ENCODE measurements at regions of chr17 and their contacts with region 1.

Region 1: GRCh38 chr17:19321481-19322128 is 40.9 kb downstream of the B9D1 start:
- DNase-seq: no peak
- H3K4me3 ChIP-seq: no peak overlapping the region
- H3K27ac ChIP-seq: no peak overlapping the region
- H3K4me1 ChIP-seq: peaks cover 0 to 16% (median 8%) of the 10 kb centered on the region in 4 experiments; a peak in 6 of 7 replicates
- H3K27me3 ChIP-seq: no peaks in the 10 kb centered on the region
- CTCF ChIP-seq: peak; percentile 38 to 61 (median 56)
- EP300 ChIP-seq: no peak
- POLR2A ChIP-seq: no peak
- RAD21 ChIP-seq: peak in 1 of 2 experiments; percentile 40; a peak in 3 of 4 replicates

Region 2: GRCh38 chr17:19306160-19307111 is 15.2 kb before region 1 on chr17:
- CTCF ChIA-PET with region 1: interaction called, 16 read pairs
- POLR2A ChIA-PET with region 1: interaction called, 3 read pairs
- DNase-seq: no peak
- H3K4me3 ChIP-seq: no peak overlapping the region
- H3K27ac ChIP-seq: no peak overlapping the region
- H3K4me1 ChIP-seq: peaks cover 0 to 4% (median 0%) of the 10 kb centered on the region in 4 experiments; a peak in 2 of 7 replicates
- H3K27me3 ChIP-seq: no peaks in the 10 kb centered on the region
- CTCF ChIP-seq: no peak
- EP300 ChIP-seq: no peak
- POLR2A ChIP-seq: no peak
- RAD21 ChIP-seq: no peak

Region 3: DNA sequence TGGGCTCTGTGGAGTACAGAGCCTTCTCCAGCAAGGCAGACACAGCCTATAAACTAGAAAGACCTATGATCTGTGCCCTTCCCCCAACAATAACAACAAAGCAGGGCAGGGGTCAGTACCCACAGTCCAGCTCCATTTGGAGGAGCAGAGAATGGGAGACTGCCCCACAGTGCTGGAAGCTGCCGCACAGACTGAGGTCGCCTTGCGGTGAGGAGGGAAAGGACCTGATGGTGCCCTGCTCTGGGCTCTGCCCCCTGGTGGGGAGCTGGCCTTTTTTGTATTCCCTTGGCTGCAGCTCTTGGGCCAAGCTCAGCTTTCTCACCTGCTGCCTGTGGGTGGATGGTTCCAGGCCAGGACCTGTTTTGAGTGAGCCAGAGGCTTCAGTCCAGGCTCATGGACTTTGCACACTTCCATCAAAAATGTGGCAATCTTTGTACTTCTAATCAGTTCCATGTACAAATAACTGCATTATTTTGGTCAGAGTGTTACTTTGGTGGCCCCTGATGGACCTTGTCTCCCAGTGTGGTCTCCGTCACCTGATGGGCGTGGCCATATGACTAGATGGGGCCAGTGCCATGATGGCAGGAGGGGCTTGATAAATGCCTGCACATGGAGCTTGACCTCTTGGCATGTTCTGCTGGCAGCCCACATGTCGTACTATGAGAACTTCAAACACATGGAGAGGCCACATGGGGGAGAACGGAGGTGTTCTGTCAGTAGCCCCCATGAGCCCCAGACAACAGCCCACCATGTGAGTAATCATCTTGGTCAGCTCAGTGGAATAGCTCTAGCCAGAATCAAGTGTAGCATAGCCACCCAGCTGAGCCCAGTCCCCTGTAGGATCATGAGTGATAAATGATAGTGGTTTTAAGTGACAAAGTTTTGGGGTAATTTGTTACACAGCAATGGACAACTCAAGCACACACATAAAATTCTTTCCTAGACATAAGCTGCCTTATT is 16.7 kb after region 1 on chr17:
- CTCF ChIA-PET with region 1: interaction called, 70 read pairs
- POLR2A ChIA-PET with region 1: interaction called, 5 read pairs
- DNase-seq: peak; percentile 47 to 75
- H3K4me3 ChIP-seq: no peak overlapping the region
- H3K27ac ChIP-seq: no peak overlapping the region
- H3K4me1 ChIP-seq: peaks cover 4 to 25% (median 15%) of the 10 kb centered on the region in 4 experiments
- H3K27me3 ChIP-seq: no peaks in the 10 kb centered on the region
- CTCF ChIP-seq: peak; percentile 67 to 96 (median 71)
- EP300 ChIP-seq: no peak
- POLR2A ChIP-seq: no peak
- RAD21 ChIP-seq: peak; percentile 46 to 62

Region 4: DNA sequence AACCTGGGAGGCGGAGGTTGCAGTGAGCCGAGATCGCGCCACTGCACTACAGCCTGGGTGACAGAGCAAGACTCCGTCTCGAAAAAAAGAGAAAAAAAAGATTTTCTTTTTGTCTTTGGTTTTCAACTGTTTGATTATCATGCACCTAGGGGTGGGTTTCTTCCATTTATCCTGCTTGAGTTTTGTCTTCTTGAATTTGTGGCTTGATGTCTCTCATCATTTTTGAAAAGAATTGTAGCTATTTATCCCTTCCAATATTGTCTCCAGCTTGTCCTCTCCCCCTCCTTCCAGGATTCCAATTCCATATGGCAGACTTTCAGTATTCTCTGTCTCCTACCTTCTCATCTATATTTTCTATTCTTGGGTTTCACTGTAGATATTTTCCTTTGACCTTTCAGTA is 33.1 kb after region 1 on chr17:
- CTCF ChIA-PET with region 1: interaction called, 11 read pairs
- POLR2A ChIA-PET with region 1: interaction called, 3 read pairs
- DNase-seq: no peak
- H3K4me3 ChIP-seq: no peak overlapping the region
- H3K27ac ChIP-seq: no peak overlapping the region
- H3K4me1 ChIP-seq: no peaks in the 10 kb centered on the region
- H3K27me3 ChIP-seq: no peaks in the 10 kb centered on the region
- CTCF ChIP-seq: no peak
- EP300 ChIP-seq: no peak
- POLR2A ChIP-seq: no peak
- RAD21 ChIP-seq: no peak